Posterior vena cava (tissue), 2 donors: ENCODE measurements at regions of chr6 and their contacts with region 1.

Region 1: DNA sequence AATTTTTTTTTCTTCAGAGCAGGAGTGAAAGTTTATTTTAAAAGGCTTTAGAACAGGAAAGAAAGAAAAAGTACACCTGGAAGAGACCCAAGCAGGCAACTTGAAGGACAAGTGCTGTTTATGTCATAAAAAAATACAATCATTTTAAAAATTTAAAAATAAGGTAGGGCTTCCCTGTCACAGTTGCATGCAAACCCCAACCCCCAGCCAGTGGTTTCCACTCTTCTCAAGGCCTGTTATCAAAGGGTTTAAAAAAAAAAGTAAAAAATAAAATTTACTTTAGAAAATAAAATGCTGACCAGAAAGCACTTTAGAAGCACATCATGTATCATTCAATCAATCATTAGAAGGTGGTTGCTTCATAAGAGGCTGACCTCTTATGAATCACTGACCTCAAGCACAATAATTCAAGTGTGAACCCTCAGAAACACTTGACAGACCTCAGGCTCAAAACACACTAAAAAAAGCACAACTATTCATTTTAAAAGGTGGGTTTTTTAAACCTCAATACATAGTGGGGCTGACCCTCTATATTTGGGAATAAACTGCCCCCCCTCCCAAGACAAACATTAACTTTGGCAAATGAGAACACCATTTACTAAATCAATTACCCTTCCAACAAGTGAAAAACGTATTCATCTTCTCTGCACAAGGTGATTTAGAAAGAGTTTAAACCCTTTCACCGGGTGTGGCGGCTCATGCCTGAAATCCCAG is 15.6 kb downstream of the ILRUN start:
- DNase-seq: no peak

Region 2: DNA sequence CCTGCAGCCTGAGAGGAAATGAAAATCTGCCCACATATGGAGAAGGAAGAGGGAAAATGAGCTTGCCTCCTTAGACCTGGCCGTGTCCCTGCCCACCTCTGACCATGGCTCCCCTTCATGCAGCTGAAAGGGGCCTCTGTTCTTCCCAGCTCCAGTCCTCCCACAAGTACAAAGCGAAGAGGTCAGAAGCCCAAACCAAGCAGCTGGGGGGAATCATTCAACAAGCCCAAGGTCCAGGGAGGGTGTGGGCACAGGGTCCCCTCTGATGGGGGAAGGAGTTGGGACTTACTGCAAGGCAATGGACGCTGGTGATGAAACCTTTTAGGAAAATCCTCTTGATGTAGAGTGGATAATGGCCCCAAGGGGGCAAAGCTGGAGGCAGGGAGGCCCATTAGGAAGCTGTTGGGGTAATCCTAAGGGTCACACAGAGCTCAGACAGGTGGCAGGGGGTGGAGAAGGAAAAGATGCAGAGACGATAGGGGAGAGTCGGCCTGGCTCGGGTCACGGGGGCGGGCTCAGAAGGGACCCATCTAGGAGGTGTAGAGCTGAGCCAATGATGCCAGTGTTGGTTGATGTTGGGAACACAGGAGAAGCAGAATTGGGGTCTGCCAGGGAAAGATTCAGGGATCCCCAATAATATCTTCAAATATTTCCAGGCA is 519.0 kb before region 1 on chr6:
- intact Hi-C with region 1: no loop called
- DNase-seq: peak; percentile 40

Region 3: DNA sequence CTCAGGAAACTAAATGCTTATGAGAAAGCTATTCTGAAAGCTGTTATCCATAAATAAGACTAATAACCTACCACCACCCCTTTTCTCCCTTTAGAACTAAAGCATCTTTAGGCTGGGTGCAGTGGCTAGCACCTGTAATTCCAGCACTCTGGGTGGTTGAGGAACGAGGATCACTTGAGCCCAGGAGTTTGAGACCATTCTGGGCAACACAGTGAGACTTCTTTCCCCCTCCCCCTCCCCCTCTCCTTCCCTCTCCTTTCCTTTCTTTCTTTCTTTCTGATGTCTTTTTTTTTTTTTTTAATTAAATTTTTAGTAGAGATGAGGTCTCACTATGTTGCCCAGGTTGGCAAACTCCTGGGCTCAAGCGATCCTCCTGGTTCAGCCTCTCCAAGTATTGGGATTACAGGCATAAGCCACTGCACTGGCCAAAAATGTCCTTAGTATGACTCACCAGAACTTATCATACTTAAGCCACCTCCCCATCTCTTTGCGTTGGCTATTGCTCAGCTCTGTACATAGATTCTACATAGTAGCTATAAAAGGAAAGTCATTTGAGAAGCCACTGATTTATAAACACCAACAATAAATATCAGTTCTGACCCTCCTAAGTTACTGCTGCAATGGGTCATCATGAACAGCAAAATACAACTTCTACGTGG is 70.0 kb before region 1 on chr6:
- intact Hi-C with region 1: no loop called
- DNase-seq: no peak

Region 4: DNA sequence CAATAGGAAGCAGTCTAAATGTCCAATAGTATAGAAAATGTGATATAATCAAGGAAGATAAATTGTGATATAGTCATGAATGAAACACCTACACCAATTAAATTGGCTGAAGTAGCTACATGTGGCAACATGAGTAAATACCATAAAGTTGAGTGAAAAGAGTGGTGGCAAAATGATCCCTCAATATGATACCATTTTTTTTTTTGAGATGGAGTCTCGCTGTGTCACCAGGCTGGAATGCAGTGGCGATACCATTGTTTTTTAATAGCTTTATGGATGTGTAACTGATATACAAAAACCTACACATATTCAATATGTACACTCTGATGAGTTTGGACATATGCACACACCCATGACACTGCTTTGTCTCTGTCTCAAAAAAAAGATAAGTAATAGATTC is 36.5 kb after region 1 on chr6:
- intact Hi-C with region 1: loop called in 1 of 2 experiments (anchors 2 kb)
- DNase-seq: no peak

Region 5: DNA sequence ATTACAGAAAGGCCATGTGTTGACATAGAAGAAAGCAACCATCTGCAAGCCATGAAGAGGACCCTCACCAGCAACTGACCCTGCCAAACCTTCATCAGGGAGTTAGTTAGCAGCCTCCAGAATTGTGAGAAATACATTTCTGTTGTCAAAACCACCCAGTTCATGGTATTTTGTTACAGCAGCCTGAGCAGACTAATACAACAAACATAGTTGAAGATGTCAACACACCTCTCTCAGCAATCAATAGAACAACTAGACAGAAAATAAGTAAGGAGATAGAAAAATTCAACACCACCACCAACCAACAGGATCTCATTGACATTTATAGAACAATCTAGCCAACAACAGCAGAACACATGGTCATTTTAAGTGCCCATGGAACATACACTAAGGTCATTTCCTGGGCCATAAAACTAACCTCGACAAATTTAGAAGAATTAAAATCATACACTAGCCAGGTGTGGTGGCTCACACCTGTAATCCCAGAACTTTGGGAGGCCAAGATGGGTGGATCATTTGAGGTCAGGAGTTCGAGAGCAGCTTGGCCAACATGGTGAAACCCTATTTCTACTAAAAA is 427.4 kb after region 1 on chr6:
- intact Hi-C with region 1: no loop called
- DNase-seq: no peak